ENCODE measurements at regions of chr9 and their contacts with region 1.

Region 1: DNA sequence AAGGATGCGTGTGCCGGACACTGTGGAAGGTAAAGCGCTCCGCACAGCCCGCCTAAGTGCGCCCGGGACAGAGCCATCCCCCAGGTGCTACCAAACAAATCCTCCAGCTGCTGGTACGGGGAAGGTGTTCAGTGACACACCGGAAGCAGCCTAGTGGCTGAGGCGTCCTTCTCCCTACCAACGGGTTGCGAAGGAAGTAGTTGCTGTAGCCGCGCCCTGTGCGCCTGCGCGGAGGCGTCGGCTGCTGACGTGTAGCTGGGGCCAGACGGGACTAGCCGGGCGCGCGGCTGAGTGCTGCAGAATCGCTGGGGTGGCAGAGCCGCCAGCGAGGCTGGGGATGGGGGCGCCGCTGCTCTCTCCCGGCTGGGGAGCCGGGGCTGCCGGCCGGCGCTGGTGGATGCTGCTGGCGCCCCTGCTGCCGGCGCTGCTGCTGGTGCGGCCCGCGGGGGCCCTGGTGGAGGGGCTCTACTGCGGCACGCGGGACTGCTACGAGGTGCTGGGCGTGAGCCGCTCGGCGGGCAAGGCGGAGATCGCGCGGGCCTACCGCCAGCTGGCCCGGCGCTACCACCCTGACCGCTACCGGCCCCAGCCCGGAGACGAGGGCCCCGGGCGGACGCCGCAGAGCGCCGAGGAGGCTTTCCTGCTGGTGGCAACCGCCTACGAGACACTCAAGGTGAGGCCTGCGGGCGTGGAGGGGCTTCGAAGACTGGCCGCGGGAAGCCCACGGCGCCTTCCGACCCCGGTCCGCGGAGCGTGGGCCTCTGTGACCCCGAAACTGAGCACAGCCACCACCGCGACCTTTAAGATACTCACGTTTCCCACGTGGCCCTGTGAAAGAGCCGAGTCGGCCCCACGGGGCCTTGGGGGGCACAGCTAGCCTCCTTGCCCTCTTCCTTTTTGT is at the start of gene DNAJC25:
- DNase-seq: peak; percentile 94 to 100 (median 98)

Region 2: DNA sequence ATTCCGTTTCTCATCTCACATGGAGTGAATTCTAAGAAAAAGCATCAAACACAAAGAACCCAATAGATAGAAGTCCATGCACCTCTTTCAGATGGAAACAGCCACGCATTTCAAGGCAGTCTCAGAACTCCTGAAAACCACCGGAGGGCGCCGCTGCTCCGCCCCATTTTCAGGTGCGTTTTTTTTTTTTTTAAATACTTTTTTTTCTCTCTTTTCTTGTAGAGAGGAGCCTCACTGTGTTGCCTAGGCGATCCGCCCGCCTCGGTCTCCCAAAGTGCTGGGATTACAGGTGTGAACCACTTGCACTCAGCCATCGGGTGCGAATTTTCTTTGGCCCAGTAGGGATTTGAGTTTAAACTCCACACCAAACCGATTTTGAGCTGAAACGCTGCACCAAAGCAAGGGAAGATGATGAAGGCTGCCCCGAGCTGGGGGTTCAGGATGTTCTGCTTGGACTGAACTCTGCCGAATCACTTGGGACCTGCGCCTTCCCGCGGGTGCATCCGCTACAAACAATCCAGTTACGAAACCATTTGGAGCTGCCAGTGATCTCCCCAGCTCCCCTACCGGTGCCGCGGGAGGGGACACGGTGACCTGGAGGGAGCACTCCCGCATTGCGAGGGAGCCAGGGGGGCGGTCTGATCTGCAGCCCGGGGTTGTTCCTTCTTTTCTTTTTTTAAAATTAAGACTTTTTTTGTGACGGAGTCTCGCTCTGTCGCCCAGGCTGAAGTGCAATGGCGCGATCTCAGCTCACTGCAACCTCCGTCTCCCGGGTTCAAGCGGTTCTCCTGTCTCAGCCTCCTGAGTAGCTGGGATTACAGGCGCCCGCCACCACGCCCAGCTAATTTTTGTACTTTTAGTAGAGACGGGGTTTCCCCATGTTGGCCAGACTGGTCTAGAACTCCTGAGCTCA is 33.2 kb before region 1 on chr9:
- intact Hi-C with region 1: loop called (anchors 2 kb)
- DNase-seq: peak; percentile 22 to 93 (median 55)

Region 3: GRCh38 chr9:111691672-111692329 is 60.5 kb after region 1 on chr9:
- intact Hi-C with region 1: loop called (anchors 2 kb)
- DNase-seq: no peak